Panc1 (cell line): ENCODE measurements at regions of chr19 and their contacts with region 1.

Region 1: GRCh38 chr19:7427944-7428343 is 60.9 kb downstream of the PEX11G start:
- DNase-seq: no peak
- ATAC-seq: no peak
- H3K4me3 ChIP-seq: no peak overlapping the region
- H3K27ac ChIP-seq: no peak overlapping the region
- H3K4me1 ChIP-seq: no peaks in the 10 kb centered on the region
- H3K27me3 ChIP-seq: no peaks in the 10 kb centered on the region
- CTCF ChIP-seq: no peak

Region 2: GRCh38 chr19:7478173-7478842 is 50.4 kb after region 1 on chr19:
- CTCF ChIA-PET with region 1: no interaction called
- POLR2A ChIA-PET with region 1: no interaction called
- in situ Hi-C with region 1: no loop called
- intact Hi-C with region 1: no loop called
- DNase-seq: no peak
- ATAC-seq: peak; percentile 42
- H3K4me3 ChIP-seq: no peak overlapping the region
- H3K27ac ChIP-seq: no peak overlapping the region
- H3K4me1 ChIP-seq: no peaks in the 10 kb centered on the region
- H3K27me3 ChIP-seq: no peaks in the 10 kb centered on the region
- CTCF ChIP-seq: no peak

Region 3: GRCh38 chr19:7829561-7830271 is 401.8 kb after region 1 on chr19 and contains the start of gene EVI5L:
- CTCF ChIA-PET with region 1: no interaction called
- POLR2A ChIA-PET with region 1: interaction called, 15 read pairs
- in situ Hi-C with region 1: no loop called
- intact Hi-C with region 1: no loop called
- DNase-seq: peak; percentile 99
- ATAC-seq: peak; percentile 95
- H3K4me3 ChIP-seq: peak within 1 kb of the TSS; percentile 45 to 50
- H3K27ac ChIP-seq: peak within 1 kb of the TSS; percentile 44; the same call in 1 of the 2 replicates
- H3K4me1 ChIP-seq: no peaks in the 10 kb centered on the region; the same call in 1 of the 2 replicates
- H3K27me3 ChIP-seq: no peaks in the 10 kb centered on the region
- CTCF ChIP-seq: no peak
- total RNA-seq, gene EVI5L: 6.4 TPM